Caco-2 (cell line): ENCODE measurements at regions of chr12 and their contacts with region 1.

Region 1: GRCh38 chr12:101607902-101608742 is 13.4 kb downstream of the MYBPC1 start:
- DNase-seq: peak; percentile 90 to 92
- H3K4me3 ChIP-seq: no peak overlapping the region
- H3K4me3 Mint-ChIP-seq: peak overlapping the region; percentile 74
- H3K27ac Mint-ChIP-seq: peak overlapping the region; percentile 99
- H3K4me1 ChIP-seq: peaks cover 45% of the 10 kb centered on the region
- H3K4me1 Mint-ChIP-seq: peaks cover 22% of the 10 kb centered on the region
- H3K27me3 ChIP-seq: no peaks in the 10 kb centered on the region
- H3K27me3 Mint-ChIP-seq: no peaks in the 10 kb centered on the region
- CTCF ChIP-seq: no peak

Region 2: DNA sequence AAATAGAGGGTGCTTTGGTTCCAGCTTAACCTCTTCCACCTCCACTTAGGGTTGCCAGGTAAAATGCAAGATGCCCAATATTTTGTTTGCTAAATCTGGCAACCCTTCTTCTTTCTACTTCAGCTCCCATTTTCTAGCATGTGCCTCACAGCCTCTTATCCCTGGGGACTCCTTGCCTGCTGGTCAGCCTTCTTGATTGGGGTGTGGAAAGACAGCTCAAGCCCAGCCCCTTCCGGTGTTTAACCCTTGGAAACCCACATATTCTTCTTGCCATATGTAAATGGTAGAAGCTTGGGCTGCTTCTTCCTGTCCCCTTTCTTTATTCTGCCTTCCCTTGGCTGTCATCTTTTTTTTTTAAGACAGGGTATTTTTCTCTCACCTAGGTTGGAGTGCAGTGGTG is 127.3 kb before region 1 on chr12:
- CTCF ChIA-PET with region 1: no interaction called
- POLR2A ChIA-PET with region 1: no interaction called
- intact Hi-C with region 1: no loop called
- DNase-seq: no peak
- H3K4me3 ChIP-seq: no peak overlapping the region
- H3K4me3 Mint-ChIP-seq: no peak overlapping the region
- H3K27ac Mint-ChIP-seq: no peak overlapping the region
- H3K4me1 ChIP-seq: no peaks in the 10 kb centered on the region
- H3K4me1 Mint-ChIP-seq: no peaks in the 10 kb centered on the region
- H3K27me3 ChIP-seq: no peaks in the 10 kb centered on the region
- H3K27me3 Mint-ChIP-seq: no peaks in the 10 kb centered on the region
- CTCF ChIP-seq: no peak

Region 3: DNA sequence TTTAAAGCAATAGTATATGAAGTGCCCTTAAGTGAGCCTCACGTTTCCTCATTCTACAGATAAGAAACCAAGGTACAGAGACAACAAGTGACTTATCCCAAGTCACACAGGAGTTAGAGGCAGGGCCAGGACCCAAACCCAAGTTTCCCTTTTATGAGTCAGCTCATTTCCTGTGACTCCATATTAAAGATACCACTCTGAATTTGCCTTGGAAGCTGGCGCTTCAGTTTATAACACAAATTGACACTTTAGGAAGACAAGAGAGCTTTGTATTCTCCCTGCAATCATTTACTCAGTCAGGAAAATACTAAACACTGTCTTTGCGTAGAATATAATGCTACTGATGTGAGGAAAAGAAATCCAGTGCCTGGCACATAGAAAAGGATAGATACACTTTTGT is 29.8 kb after region 1 on chr12:
- CTCF ChIA-PET with region 1: no interaction called
- POLR2A ChIA-PET with region 1: no interaction called
- intact Hi-C with region 1: loop called (anchors 2 kb)
- DNase-seq: no peak
- H3K4me3 ChIP-seq: no peak overlapping the region
- H3K4me3 Mint-ChIP-seq: no peak overlapping the region
- H3K27ac Mint-ChIP-seq: no peak overlapping the region
- H3K4me1 ChIP-seq: no peaks in the 10 kb centered on the region
- H3K4me1 Mint-ChIP-seq: no peaks in the 10 kb centered on the region
- H3K27me3 ChIP-seq: no peaks in the 10 kb centered on the region
- H3K27me3 Mint-ChIP-seq: no peaks in the 10 kb centered on the region
- CTCF ChIP-seq: no peak

Region 4: GRCh38 chr12:101666052-101666728 is 58.1 kb after region 1 on chr12:
- CTCF ChIA-PET with region 1: no interaction called
- POLR2A ChIA-PET with region 1: no interaction called
- intact Hi-C with region 1: no loop called
- DNase-seq: no peak
- H3K4me3 ChIP-seq: no peak overlapping the region
- H3K4me3 Mint-ChIP-seq: no peak overlapping the region
- H3K27ac Mint-ChIP-seq: peak overlapping the region; percentile 12
- H3K4me1 ChIP-seq: peaks cover 7% of the 10 kb centered on the region; the same call in 1 of the 2 replicates
- H3K4me1 Mint-ChIP-seq: peaks cover 19% of the 10 kb centered on the region
- H3K27me3 ChIP-seq: no peaks in the 10 kb centered on the region
- H3K27me3 Mint-ChIP-seq: peaks cover 2% of the 10 kb centered on the region
- CTCF ChIP-seq: no peak

Region 5: DNA sequence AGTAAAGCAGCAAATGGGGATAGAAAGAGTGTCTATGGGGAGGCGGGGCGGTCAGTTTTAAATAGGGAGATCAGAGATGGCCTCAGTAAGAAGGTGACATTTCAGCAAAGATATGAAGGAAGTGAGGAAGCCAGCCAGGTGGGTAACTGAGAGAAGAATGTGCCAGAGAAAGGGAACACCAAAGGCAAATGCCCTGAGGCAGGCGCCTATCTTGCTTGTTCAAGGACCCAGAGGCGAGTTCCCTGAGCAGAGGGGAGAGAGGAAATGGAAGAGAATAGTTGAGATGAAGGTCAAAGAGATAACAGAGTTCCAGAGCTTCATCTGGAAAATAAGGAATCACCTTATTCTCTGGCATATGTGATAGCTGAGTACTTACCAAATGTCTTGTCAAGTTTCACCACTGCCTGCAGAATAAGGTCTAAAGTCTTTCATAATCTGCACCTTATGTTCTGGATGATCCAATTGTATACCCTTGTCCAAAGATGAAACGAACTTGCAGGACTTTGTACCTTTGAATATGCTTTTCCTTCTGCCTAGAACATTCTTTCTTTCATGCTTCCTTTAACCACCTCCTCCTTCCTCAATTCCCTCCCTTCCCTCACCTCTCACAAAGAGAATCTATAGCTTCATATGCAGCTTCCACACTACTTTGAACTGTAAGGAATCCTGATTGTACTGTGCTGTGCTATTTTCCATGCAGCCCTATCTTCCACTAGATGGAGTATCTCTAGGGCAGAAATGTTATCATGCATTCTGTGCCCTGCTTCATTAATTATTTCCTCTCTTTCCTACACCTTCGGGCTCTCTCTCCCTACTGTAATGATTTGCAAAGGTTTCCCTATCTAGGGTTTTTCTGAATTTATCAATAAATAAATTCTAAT is 184.2 kb after region 1 on chr12:
- CTCF ChIA-PET with region 1: no interaction called
- POLR2A ChIA-PET with region 1: no interaction called
- intact Hi-C with region 1: no loop called
- DNase-seq: peak; percentile 14 to 55
- H3K4me3 ChIP-seq: no peak overlapping the region
- H3K4me3 Mint-ChIP-seq: no peak overlapping the region
- H3K27ac Mint-ChIP-seq: no peak overlapping the region
- H3K4me1 ChIP-seq: peaks cover 12% of the 10 kb centered on the region; the same call in 1 of the 2 replicates
- H3K4me1 Mint-ChIP-seq: peaks cover 16% of the 10 kb centered on the region
- H3K27me3 ChIP-seq: no peaks in the 10 kb centered on the region
- H3K27me3 Mint-ChIP-seq: no peaks in the 10 kb centered on the region
- CTCF ChIP-seq: peak in 1 of 2 experiments; percentile 44